Activated naive CD4-positive, alpha-beta T cell treated with anti-CD3 and anti-CD28 coated beads for 36 hours (primary cell): ENCODE measurements at regions of chr3 and their contacts with region 1.

Region 1: GRCh38 chr3:183468424-183468823 is 40.0 kb upstream of the MCF2L2 start:
- DNase-seq: no peak
- H3K4me3 Mint-ChIP-seq: no peak overlapping the region
- H3K27ac Mint-ChIP-seq: peak overlapping the region; percentile 87
- H3K4me1 Mint-ChIP-seq: peaks cover 27% of the 10 kb centered on the region
- H3K27me3 Mint-ChIP-seq: no peaks in the 10 kb centered on the region

Region 2: GRCh38 chr3:183158551-183159006 is 309.8 kb before region 1 on chr3:
- CTCF ChIA-PET with region 1: no interaction called
- intact Hi-C with region 1: loop called (anchors 1 kb)
- DNase-seq: peak; percentile 80
- H3K4me3 Mint-ChIP-seq: peak overlapping the region; percentile 19
- H3K27ac Mint-ChIP-seq: peak overlapping the region; percentile 74
- H3K4me1 Mint-ChIP-seq: peaks cover 41% of the 10 kb centered on the region
- H3K27me3 Mint-ChIP-seq: no peaks in the 10 kb centered on the region

Region 3: DNA sequence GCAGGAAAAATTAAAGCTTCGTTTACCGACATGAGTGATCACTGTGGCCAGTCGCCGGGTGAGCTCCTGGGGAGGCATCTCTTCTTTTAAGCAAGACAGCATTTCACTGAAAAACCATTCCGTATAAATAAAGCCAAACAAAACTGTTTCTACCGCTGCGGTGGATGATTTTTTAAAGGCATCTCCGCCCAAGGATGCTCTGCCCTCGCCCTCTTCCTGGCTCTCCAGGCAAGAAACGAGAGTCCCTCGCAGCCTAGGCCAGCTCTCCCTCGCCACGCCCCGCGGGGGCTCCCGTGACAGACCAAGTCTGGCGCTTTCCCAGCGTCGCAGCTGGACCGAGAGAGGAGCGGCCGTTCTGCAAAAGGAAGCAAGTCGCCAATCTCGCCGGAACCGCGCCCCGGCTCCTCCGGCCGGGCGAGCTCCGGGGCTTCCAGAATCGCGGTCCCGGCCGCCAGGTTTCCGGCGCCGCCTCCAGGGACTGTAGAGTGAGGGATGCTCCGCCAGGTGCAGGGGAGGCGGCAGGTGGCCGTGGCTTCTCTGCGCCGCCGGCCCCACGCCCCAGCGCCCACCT is 40.5 kb before region 1 on chr3:
- CTCF ChIA-PET with region 1: interaction called, 3 read pairs
- intact Hi-C with region 1: loop called (anchors 1 kb)
- DNase-seq: peak; percentile 40
- H3K4me3 Mint-ChIP-seq: peak overlapping the region; percentile 79
- H3K27ac Mint-ChIP-seq: no peak overlapping the region
- H3K4me1 Mint-ChIP-seq: peaks cover 27% of the 10 kb centered on the region
- H3K27me3 Mint-ChIP-seq: peaks cover 14% of the 10 kb centered on the region

Region 4: GRCh38 chr3:183591881-183592521 is 123.6 kb after region 1 on chr3:
- CTCF ChIA-PET with region 1: no interaction called
- intact Hi-C with region 1: loop called (anchors 1 kb)
- DNase-seq: peak; percentile 19
- H3K4me3 Mint-ChIP-seq: peak overlapping the region; percentile 37
- H3K27ac Mint-ChIP-seq: peak overlapping the region; percentile 86
- H3K4me1 Mint-ChIP-seq: peaks cover 48% of the 10 kb centered on the region
- H3K27me3 Mint-ChIP-seq: no peaks in the 10 kb centered on the region

Region 5: DNA sequence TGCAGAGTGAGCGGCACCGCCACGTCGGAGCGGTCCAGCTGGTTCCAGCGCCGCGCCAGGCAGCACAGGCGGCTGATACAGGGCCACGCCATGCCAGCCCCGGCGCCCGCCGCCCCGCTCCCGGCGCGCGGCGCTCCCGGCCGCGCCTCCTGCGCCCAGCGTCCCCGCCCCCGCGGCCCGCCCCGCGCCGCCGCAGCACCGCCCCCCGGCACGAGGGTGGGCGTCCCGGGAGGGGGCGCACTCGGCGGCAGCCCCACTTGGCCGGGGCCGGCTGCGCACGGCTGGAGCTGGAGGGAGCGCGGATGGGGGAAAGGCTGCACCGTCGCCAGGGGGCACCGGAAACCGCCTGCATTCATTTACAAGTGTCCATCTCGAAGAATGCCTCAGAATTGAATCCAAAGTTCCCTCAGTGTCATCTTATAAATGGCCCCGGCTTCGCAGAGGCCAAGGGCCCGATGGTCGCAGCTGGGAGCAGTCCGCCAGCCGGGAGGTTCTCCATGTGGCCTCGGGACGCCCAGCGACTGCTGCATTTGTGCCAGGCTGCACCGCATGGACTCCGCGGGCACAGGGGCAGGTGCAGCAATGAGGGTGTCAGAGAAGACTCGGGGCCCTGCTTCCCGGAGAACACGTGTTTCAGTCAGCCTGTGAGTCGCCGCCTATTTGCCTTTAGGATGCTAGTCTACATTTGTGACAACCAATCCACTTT is 357.2 kb after region 1 on chr3 and contains the start of gene MAP6D1:
- CTCF ChIA-PET with region 1: no interaction called
- intact Hi-C with region 1: loop called (anchors 2 kb)
- DNase-seq: peak; percentile 55
- H3K4me3 Mint-ChIP-seq: peak within 1 kb of the TSS; percentile 70
- H3K27ac Mint-ChIP-seq: no peak within 1 kb of the TSS
- H3K4me1 Mint-ChIP-seq: peaks cover 16% of the 10 kb centered on the region
- H3K27me3 Mint-ChIP-seq: no peaks in the 10 kb centered on the region
- total RNA-seq, gene MAP6D1: 1.1 to 1.4 TPM

Region 6: DNA sequence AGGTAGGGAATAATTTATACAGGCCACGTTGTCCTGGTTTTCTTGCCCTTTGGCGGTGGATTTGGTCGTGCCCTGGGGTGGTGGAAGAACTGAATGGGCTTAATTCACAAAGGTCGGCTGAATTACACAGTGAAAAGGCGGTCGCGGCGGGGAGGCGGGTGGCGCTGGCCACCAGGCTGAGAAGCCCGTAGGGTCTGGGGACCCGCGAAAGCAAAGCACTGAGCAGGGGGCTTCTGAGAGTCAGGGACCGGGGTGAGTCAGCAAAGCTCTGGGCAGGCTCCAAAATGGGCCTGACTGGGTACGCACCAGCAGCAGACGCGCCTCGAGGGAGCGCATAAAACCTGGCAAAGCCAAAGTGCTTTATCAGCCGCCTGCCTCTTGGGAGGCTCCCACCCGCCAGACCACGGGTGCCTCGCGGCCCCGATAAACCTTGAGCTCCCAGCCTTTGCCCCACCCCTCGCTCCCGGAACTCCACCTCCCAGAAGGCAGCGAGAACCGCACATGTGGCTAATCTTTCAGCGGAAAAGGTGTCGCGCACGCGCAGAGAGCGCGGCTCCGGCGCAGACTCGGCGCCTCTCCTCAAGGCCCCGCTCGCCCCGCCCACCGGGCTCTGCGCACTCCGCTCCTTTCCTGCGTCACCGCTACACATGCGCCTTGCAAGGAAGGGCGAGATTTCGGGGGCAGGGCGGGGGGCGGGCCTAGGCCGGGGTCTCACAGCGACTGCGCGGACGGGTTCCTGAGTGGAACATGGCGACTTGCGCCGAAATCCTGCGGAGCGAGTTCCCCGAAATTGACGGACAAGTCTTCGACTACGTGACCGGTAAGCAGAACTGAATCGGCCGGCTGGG is 717.3 kb after region 1 on chr3 and contains the start of gene ABCF3:
- CTCF ChIA-PET with region 1: no interaction called
- intact Hi-C with region 1: loop called (anchors 5 kb)
- DNase-seq: peak; percentile 99
- H3K4me3 Mint-ChIP-seq: peak within 1 kb of the TSS; percentile 94
- H3K27ac Mint-ChIP-seq: peak within 1 kb of the TSS; percentile 92
- H3K4me1 Mint-ChIP-seq: peaks cover 28% of the 10 kb centered on the region
- H3K27me3 Mint-ChIP-seq: no peaks in the 10 kb centered on the region
- total RNA-seq, gene ABCF3: 38.5 to 39.1 TPM